ENCODE measurements at regions of chr9 and their contacts with region 1.

Region 1: GRCh38 chr9:113548221-113549041 is 84.9 kb downstream of the RGS3 start:
- DNase-seq: peak; percentile 93
- ATAC-seq: peak; percentile 94
- H3K4me3 ChIP-seq: peak overlapping the region in 1 of 3 experiments; percentile 34; a peak in 2 of 6 replicates
- H3K27ac ChIP-seq: peak overlapping the region; percentile 54
- H3K4me1 ChIP-seq: peaks cover 41% of the 10 kb centered on the region
- H3K27me3 ChIP-seq: no peaks in the 10 kb centered on the region
- CTCF ChIP-seq: no peak
- EP300 ChIP-seq: peak in 1 of 2 experiments; percentile 43; a peak in 1 of 4 replicates
- POLR2A ChIP-seq: 0 out of 4 replicates have a peak, but pooled peaks of 1 of the 2 experiments have one; percentile 26
- RAD21 ChIP-seq: no peak

Region 2: GRCh38 chr9:113558632-113559502 is 10.4 kb after region 1 on chr9:
- CTCF ChIA-PET with region 1: no interaction called
- POLR2A ChIA-PET with region 1: interaction called, 13 read pairs
- in situ Hi-C with region 1: no loop called
- intact Hi-C with region 1: loop called (anchors 2 kb)
- DNase-seq: peak; percentile 83
- ATAC-seq: peak; percentile 100
- H3K4me3 ChIP-seq: peak overlapping the region in 1 of 3 experiments; percentile 52; a peak in 2 of 6 replicates
- H3K27ac ChIP-seq: peak overlapping the region; percentile 67
- H3K4me1 ChIP-seq: peaks cover 31% of the 10 kb centered on the region
- H3K27me3 ChIP-seq: no peaks in the 10 kb centered on the region
- CTCF ChIP-seq: no peak; the same call in 1 of the 2 replicates
- EP300 ChIP-seq: no peak; a peak in 1 of 4 replicates
- POLR2A ChIP-seq: no peak
- RAD21 ChIP-seq: peak; percentile 24; the same call in 1 of the 2 replicates

Region 3: GRCh38 chr9:113564498-113565237 is 16.2 kb after region 1 on chr9:
- CTCF ChIA-PET with region 1: no interaction called
- POLR2A ChIA-PET with region 1: interaction called, 13 read pairs
- in situ Hi-C with region 1: no loop called
- intact Hi-C with region 1: loop called (anchors 2 kb)
- DNase-seq: no peak
- ATAC-seq: peak; percentile 13
- H3K4me3 ChIP-seq: peak overlapping the region in 1 of 3 experiments; percentile 49; a peak in 2 of 6 replicates
- H3K27ac ChIP-seq: no peak overlapping the region
- H3K4me1 ChIP-seq: peaks cover 48% of the 10 kb centered on the region
- H3K27me3 ChIP-seq: no peaks in the 10 kb centered on the region
- CTCF ChIP-seq: no peak
- EP300 ChIP-seq: no peak
- POLR2A ChIP-seq: no peak
- RAD21 ChIP-seq: no peak

Region 4: GRCh38 chr9:113620377-113621161 is 72.1 kb after region 1 on chr9:
- CTCF ChIA-PET with region 1: no interaction called
- POLR2A ChIA-PET with region 1: no interaction called
- in situ Hi-C with region 1: no loop called
- intact Hi-C with region 1: no loop called
- DNase-seq: peak; percentile 77
- ATAC-seq: peak; percentile 58
- H3K4me3 ChIP-seq: peak overlapping the region in 2 of 3 experiments; percentile 9 to 39; a peak in 2 of 6 replicates
- H3K27ac ChIP-seq: no peak overlapping the region
- H3K4me1 ChIP-seq: peaks cover 73% of the 10 kb centered on the region
- H3K27me3 ChIP-seq: peaks cover 0 to 17% of the 10 kb centered on the region in 2 experiments; a peak in 2 of 5 replicates
- CTCF ChIP-seq: no peak
- EP300 ChIP-seq: no peak
- POLR2A ChIP-seq: no peak
- RAD21 ChIP-seq: 0 out of 2 replicates have a peak, but pooled peaks have one; percentile 20